Mammary epithelial cell (primary cell): ENCODE measurements at regions of chr21 and their contacts with region 1.

Region 1: GRCh38 chr21:44029460-44030087 is 17.5 kb downstream of the TRAPPC10 start:
- DNase-seq: no peak
- H3K4me3 ChIP-seq: no peak overlapping the region
- H3K27ac ChIP-seq: no peak overlapping the region
- H3K4me1 ChIP-seq: peaks cover 2% of the 10 kb centered on the region
- H3K27me3 ChIP-seq: no peaks in the 10 kb centered on the region
- CTCF ChIP-seq: no peak

Region 2: GRCh38 chr21:44065428-44065827 is 35.9 kb after region 1 on chr21:
- CTCF ChIA-PET with region 1: no interaction called
- dilution Hi-C with region 1: loop called (anchors 5 kb)
- in situ Hi-C with region 1: no loop called
- intact Hi-C with region 1: no loop called
- DNase-seq: no peak
- H3K4me3 ChIP-seq: no peak overlapping the region
- H3K27ac ChIP-seq: no peak overlapping the region
- H3K4me1 ChIP-seq: no peaks in the 10 kb centered on the region
- H3K27me3 ChIP-seq: no peaks in the 10 kb centered on the region
- CTCF ChIP-seq: no peak